OCI-LY7 (cell line): ENCODE measurements at regions of chr9 and their contacts with region 1.

Region 1: DNA sequence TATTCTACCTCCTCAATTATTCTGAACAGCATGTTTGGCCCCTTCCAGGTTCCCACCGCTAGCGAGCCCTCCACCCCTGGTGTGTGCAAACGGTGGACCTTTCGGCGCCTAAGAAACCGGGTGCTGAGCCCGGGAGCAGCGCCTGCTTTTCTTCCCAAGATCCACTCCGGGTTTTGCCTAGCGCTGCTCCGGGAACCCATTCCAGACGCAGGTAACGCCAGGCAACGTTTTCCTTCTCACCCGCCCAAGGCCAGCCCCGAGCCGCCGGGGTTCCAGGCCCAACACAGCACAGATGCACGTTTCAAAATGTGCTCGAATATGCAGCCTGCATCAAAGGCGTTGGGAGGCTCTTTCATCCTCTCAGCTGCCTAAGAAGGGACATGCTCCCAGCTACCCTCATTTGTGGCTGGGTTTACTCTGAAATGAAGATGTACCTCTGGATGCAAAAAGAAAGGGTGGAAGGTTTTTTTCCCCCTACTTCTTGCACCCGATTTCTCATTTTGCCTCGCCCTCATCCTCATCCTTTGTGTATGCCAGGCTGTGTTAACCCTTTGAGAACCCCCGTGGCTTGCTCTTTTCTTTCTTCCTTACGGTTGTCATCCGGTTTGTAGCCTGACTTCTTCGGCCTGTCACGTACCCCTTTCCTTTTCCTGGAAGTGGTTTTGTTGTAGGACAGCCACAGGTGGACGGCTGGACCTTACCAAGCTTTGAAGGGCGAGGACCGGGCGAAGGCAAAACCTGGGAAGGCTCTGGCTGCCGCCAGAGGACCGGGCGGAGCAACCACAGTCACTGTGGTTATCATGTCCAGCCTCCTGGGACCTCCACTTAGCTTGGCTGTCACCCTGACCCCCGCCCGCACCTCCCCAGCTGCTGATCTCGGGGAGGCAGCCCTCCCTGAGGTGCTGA is 226.9 kb downstream of the SMARCA2 start:
- DNase-seq: peak; percentile 89
- H3K4me3 ChIP-seq: peak overlapping the region; percentile 62
- H3K27ac ChIP-seq: peak overlapping the region; percentile 61
- H3K4me1 ChIP-seq: peaks cover 13% of the 10 kb centered on the region
- CTCF ChIP-seq: no peak

Region 2: GRCh38 chr9:2158111-2158610 is 83.9 kb before region 1 on chr9:
- CTCF ChIA-PET with region 1: no interaction called
- POLR2A ChIA-PET with region 1: interaction called, 3 read pairs
- intact Hi-C with region 1: loop called (anchors 1 kb)
- DNase-seq: peak; percentile 89
- H3K4me3 ChIP-seq: peak overlapping the region; percentile 75
- H3K27ac ChIP-seq: peak overlapping the region; percentile 72
- H3K4me1 ChIP-seq: peaks cover 24% of the 10 kb centered on the region
- CTCF ChIP-seq: peak; percentile 20; the same call in 1 of the 2 replicates

Region 3: DNA sequence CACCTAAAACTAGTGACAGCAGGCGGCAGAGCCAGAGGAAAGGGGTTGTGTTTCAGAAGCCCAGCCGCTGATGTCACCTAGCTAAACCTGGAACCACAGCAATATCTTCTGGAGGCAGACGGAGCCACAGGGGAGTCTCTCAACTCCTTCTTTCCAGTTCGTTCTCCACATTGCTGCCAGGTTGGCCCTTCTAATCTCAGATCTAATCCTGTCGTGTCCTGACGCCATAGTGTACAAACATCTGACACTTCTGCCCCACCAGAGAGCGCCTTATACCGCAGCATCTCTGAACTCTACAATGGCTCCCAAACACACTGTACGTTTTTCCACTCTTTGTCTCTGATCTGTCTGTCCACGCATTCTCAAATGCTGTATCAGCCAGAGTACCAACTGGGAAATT is 13.0 kb after region 1 on chr9:
- CTCF ChIA-PET with region 1: no interaction called
- POLR2A ChIA-PET with region 1: interaction called, 11 read pairs
- intact Hi-C with region 1: no loop called
- DNase-seq: no peak
- H3K4me3 ChIP-seq: no peak overlapping the region
- H3K27ac ChIP-seq: no peak overlapping the region
- H3K4me1 ChIP-seq: peaks cover 41% of the 10 kb centered on the region
- CTCF ChIP-seq: peak; percentile 27; the same call in 1 of the 2 replicates

Region 4: GRCh38 chr9:2271426-2271825 is 29.3 kb after region 1 on chr9:
- CTCF ChIA-PET with region 1: no interaction called
- POLR2A ChIA-PET with region 1: interaction called, 10 read pairs
- intact Hi-C with region 1: no loop called
- DNase-seq: peak; percentile 42
- H3K4me3 ChIP-seq: no peak overlapping the region
- H3K27ac ChIP-seq: no peak overlapping the region
- H3K4me1 ChIP-seq: peaks cover 34% of the 10 kb centered on the region
- CTCF ChIP-seq: no peak

Region 5: GRCh38 chr9:2403701-2404100 is 161.6 kb after region 1 on chr9:
- CTCF ChIA-PET with region 1: no interaction called
- POLR2A ChIA-PET with region 1: no interaction called
- intact Hi-C with region 1: no loop called
- DNase-seq: no peak
- H3K4me3 ChIP-seq: no peak overlapping the region
- H3K27ac ChIP-seq: no peak overlapping the region
- H3K4me1 ChIP-seq: no peaks in the 10 kb centered on the region
- CTCF ChIP-seq: no peak

Region 6: GRCh38 chr9:2849941-2850340 is 607.9 kb after region 1 on chr9:
- CTCF ChIA-PET with region 1: no interaction called
- POLR2A ChIA-PET with region 1: no interaction called
- intact Hi-C with region 1: loop called (anchors 10 kb)
- DNase-seq: no peak
- H3K4me3 ChIP-seq: no peak overlapping the region
- H3K27ac ChIP-seq: no peak overlapping the region
- H3K4me1 ChIP-seq: peaks cover 8% of the 10 kb centered on the region
- CTCF ChIP-seq: no peak

Region 7: DNA sequence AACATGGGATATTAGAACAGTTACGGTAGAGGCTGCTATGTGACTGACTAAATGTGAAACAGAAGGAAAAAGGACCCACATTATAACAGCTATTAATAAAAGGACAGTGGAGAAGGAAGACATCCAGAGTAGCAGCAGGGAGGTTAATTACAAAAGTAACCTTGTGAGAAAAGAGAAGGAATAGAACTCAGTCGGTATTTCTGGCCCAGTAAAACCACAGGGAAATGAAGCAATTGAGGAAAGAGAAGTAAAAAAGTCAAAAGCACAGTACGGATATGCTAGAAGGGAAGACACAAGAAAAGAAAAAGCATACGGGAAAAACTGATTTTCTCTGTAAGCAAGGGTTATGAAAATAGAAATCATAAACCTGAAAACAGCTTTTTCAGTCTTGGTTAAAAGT is 1119.0 kb after region 1 on chr9:
- CTCF ChIA-PET with region 1: no interaction called
- POLR2A ChIA-PET with region 1: no interaction called
- intact Hi-C with region 1: no loop called
- DNase-seq: no peak
- H3K4me3 ChIP-seq: no peak overlapping the region
- H3K27ac ChIP-seq: no peak overlapping the region
- H3K4me1 ChIP-seq: peaks cover 9% of the 10 kb centered on the region
- CTCF ChIP-seq: no peak